ENCODE measurements at regions of chr16 and their contacts with region 1.

Region 1: DNA sequence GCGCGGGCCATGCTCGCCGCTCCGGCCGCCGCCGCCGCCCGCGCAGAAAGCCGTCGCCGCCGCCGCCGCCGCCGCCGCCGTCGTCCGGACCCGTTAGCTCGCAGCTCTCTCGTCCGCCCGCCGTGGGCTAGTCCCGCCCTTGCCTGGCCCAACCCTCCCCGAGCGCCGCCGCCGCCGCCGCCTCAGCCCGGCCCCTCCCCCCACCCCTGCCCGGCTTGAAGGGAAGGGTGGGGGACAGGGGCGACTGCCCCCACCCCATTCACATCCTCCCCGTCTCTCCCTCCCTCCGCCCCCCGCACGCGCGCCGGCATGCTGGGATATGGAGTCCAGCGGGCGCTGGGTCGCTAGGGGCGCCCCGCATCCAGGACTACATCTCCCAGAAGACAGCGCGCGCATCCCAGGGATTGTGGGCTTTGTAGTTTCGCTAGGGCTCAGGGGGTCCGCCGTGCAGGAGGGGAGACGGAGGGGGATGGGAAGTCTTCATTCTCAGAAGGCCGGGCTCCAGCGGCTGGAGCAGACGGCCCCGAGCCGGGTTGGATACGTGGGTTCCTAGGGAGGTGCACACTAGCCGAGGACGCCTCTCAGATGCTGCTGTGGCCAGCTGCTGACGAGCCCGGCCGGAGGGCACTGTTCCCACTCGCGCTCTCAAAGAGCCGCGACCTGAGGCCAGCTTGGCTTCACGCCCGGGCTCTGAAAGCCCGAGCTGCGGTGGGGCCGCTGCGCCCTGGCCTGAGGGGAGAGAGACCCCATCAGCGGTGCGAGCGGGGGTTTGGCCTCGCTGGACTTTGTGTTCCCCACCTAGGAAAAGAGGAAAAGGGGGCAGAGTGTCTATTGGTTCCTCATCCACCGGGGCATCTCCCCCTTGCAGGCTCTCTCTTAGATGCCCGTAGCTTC is at the start of gene ST3GAL2:
- DNase-seq: peak; percentile 76 to 82 (median 81)
- H3K4me3 ChIP-seq: peak within 1 kb of the TSS; percentile 82 to 96 (median 91)
- H3K4me3 Mint-ChIP-seq: peak within 1 kb of the TSS; percentile 99 to 100
- H3K27ac ChIP-seq: peak within 1 kb of the TSS in 1 of 2 donors; percentile 73
- H3K27ac Mint-ChIP-seq: peak within 1 kb of the TSS; percentile 77 to 95 (median 89)
- H3K4me1 ChIP-seq: peaks cover 23 to 34% of the 10 kb centered on the region in 2 donors
- H3K4me1 Mint-ChIP-seq: peaks cover 37% of the 10 kb centered on the region
- H3K27me3 ChIP-seq: no peaks in the 10 kb centered on the region
- H3K27me3 Mint-ChIP-seq: peaks cover 2 to 6% (median 5%) of the 10 kb centered on the region in 3 donors
- CTCF ChIP-seq: peak; percentile 7
- polyA plus RNA-seq, gene ST3GAL2: 13.5 to 20.0 (median 18.4) TPM

Region 2: DNA sequence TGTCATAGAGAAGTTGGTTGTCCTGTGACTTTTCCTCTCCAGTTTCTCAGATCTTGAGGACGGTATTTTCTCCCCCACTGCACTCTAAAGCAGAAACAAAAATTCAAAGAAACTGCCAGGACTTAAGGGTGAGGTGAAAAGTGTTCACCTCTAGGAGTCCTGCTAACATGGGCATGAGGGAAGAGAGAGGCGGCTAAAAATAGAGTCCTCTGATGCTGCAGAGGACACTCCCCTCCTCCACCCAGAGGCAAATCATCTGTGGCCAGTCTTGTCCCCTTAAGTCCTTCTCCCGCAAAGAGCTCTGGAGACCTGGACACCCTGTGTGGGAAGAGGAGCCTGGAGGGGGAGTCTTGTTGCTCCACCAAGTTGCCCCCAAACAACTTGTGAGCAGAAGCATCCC is 97.2 kb before region 1 on chr16:
- intact Hi-C with region 1: no loop called
- DNase-seq: no peak
- H3K4me3 ChIP-seq: no peak overlapping the region
- H3K4me3 Mint-ChIP-seq: no peak overlapping the region
- H3K27ac ChIP-seq: no peak overlapping the region
- H3K27ac Mint-ChIP-seq: no peak overlapping the region
- H3K4me1 ChIP-seq: peaks cover 5 to 7% of the 10 kb centered on the region in 2 donors
- H3K4me1 Mint-ChIP-seq: peaks cover 6% of the 10 kb centered on the region
- H3K27me3 ChIP-seq: no peaks in the 10 kb centered on the region
- H3K27me3 Mint-ChIP-seq: peaks cover 0 to 4% (median 1%) of the 10 kb centered on the region in 3 donors
- CTCF ChIP-seq: no peak

Region 3: DNA sequence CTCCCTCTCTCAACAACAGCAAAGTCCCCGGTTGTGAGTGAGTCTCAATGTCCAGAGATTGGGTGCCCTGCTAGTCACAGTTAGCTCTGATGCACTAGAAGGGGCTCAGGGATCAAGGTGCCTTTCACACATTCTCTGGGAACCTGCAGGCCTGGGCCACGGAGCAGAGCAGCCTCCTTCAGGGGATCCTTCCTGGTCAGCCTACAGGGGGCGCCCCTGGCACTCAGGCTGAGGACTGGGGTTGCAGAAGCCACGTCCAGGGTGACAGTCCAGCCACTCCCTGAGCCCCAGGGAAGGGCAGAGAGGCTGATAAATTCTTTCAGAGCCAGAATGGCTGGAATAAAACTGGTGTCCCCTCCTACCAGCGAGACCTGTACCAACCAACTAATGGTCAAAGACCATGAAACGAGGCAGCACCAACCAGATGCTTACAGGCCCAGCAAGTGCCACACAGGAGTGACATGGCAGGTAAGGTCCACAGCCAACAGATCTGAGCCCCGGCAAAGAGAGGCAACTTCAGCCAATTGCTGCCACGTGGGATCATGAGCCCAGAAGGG is 43.8 kb before region 1 on chr16:
- intact Hi-C with region 1: loop called in 1 of 2 experiments (anchors 5 kb)
- DNase-seq: peak; percentile 61 to 72 (median 68)
- H3K4me3 ChIP-seq: no peak overlapping the region
- H3K4me3 Mint-ChIP-seq: no peak overlapping the region
- H3K27ac ChIP-seq: no peak overlapping the region
- H3K27ac Mint-ChIP-seq: peak overlapping the region in 1 of 7 donors; percentile 58
- H3K4me1 ChIP-seq: peaks cover 0 to 4% of the 10 kb centered on the region in 2 donors
- H3K4me1 Mint-ChIP-seq: peaks cover 4% of the 10 kb centered on the region
- H3K27me3 ChIP-seq: no peaks in the 10 kb centered on the region
- H3K27me3 Mint-ChIP-seq: peaks cover 0 to 2% (median 2%) of the 10 kb centered on the region in 3 donors
- CTCF ChIP-seq: peak; percentile 83

Region 4: DNA sequence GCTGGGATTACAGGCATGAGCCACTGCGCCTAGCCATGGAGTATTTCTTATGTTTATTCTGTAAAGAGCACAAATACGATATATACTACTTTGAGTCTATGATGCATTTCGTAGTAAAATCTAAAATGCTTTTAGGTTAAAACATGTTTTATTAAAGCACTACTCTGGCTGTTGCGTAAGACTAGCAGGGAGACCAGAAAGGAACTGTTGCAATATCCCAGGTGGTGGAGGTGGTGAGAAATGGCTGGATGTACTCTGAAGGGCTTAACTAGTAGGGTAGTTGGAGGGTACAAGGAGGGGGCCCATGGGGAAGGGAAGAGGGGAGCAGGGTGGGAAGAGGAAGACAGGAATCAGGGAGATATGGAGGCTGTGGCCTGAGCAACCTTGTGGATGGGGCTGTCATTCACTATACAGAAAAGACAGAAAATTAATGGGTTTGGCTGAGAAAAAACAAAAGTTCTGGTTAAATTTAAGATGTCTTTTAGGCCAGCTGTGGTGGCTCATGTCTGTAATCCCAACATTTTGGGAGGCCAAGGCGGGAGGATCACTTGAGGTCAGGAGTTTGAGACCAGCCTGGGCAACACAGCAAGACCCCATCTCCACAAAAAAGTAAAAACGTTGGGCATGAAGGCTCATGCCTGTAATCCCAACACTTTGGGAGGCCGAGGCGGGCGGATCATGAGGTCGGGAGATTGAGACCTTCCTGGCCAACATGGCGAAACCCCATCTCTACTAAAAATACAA is 36.1 kb before region 1 on chr16:
- intact Hi-C with region 1: loop called in 1 of 2 experiments (anchors 2 kb)
- DNase-seq: peak in 2 of 3 donors; percentile 42 to 49
- H3K4me3 ChIP-seq: no peak overlapping the region
- H3K4me3 Mint-ChIP-seq: peak overlapping the region; percentile 34 to 53
- H3K27ac ChIP-seq: no peak overlapping the region
- H3K27ac Mint-ChIP-seq: peak overlapping the region; percentile 87 to 96 (median 92)
- H3K4me1 ChIP-seq: peaks cover 32 to 39% of the 10 kb centered on the region in 2 donors
- H3K4me1 Mint-ChIP-seq: peaks cover 45% of the 10 kb centered on the region
- H3K27me3 ChIP-seq: no peaks in the 10 kb centered on the region
- H3K27me3 Mint-ChIP-seq: peaks cover 2 to 5% (median 5%) of the 10 kb centered on the region in 3 donors
- CTCF ChIP-seq: no peak

Measured in CD14-positive monocyte (primary cell).